Activated CD4-positive, alpha-beta memory T cell treated with anti-CD3 and anti-CD28 coated beads for 36 hours (primary cell): ENCODE measurements at regions of chr1 and their contacts with region 1.

Region 1: GRCh38 chr1:65002508-65003315 is 36.4 kb upstream of the JAK1 start:
- DNase-seq: peak; percentile 82
- H3K4me3 Mint-ChIP-seq: peak overlapping the region; percentile 76
- H3K27ac Mint-ChIP-seq: peak overlapping the region; percentile 84
- H3K4me1 Mint-ChIP-seq: peaks cover 23% of the 10 kb centered on the region
- H3K27me3 Mint-ChIP-seq: no peaks in the 10 kb centered on the region

Region 2: DNA sequence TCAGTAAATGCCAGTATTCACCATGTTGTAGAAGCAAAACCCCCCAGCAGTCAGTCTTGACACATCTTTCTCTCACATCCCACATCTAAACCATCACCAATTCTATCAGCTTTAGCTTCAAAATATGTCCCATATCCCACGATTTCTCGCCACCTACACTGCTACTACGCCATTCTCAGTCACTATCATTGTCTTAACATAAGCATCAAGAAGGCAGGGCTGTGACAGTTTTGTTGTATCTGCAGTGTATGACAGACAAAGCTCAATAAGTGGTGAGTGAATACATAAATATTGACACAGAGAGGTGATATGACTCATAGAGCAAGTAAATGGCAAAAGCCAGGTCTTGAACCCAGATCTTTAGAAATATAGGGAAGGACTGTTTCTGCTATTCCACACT is 96.3 kb before region 1 on chr1:
- CTCF ChIA-PET with region 1: no interaction called
- POLR2A ChIA-PET with region 1: no interaction called
- intact Hi-C with region 1: loop called (anchors 5 kb)
- DNase-seq: peak; percentile 59
- H3K4me3 Mint-ChIP-seq: no peak overlapping the region
- H3K27ac Mint-ChIP-seq: peak overlapping the region; percentile 58
- H3K4me1 Mint-ChIP-seq: peaks cover 91% of the 10 kb centered on the region
- H3K27me3 Mint-ChIP-seq: no peaks in the 10 kb centered on the region

Region 3: GRCh38 chr1:64956733-64957441 is 45.8 kb before region 1 on chr1:
- CTCF ChIA-PET with region 1: interaction called, 3 read pairs
- POLR2A ChIA-PET with region 1: interaction called, 14 read pairs
- intact Hi-C with region 1: loop called (anchors 2 kb)
- DNase-seq: peak; percentile 76
- H3K4me3 Mint-ChIP-seq: no peak overlapping the region
- H3K27ac Mint-ChIP-seq: no peak overlapping the region
- H3K4me1 Mint-ChIP-seq: peaks cover 59% of the 10 kb centered on the region
- H3K27me3 Mint-ChIP-seq: no peaks in the 10 kb centered on the region

Region 4: DNA sequence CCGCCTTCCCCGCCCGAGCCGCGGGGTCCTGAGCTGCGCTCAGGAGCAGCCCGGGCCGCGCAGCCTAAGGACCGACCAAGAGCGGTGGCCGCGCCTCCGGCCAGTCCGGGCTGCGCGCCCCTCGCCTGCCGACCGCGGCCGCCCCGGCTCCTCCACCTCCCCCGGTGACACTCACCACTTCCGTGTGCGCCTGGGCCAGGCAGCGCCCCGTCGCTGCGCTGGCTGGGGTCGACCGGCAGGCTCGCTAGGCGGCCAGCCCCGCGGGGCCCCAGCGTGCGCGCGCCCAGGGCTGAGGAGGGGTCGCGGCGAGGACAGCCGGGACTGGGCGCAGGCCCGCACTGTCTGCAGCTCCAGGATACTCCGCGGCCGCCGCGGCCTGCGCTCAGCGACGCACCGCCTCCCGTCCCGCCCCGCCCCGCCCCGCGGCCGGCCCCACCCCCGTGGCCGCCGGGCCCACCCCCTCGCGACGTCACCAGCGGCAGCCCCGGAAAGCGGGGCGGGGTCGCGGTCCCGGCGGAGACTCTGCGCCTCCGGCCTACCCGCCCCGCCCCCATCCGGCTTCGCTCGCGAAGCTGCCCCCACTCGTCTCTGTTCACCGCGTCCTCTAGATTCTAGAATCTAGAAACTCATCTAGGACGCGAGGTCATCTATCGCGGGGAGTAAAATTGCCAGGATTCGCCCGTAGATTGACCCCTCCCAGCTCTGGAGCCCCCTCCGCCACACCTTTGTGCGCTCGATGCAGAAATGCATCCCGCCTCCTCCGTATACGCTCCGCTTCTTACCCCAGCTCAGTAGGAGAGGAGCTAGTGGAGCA is 36.3 kb before region 1 on chr1 and contains the start of gene JAK1:
- CTCF ChIA-PET with region 1: interaction called, 4 read pairs
- POLR2A ChIA-PET with region 1: interaction called, 14 read pairs
- intact Hi-C with region 1: loop called (anchors 1 kb)
- DNase-seq: peak; percentile 89
- H3K4me3 Mint-ChIP-seq: peak within 1 kb of the TSS; percentile 91
- H3K27ac Mint-ChIP-seq: peak within 1 kb of the TSS; percentile 72
- H3K4me1 Mint-ChIP-seq: peaks cover 48% of the 10 kb centered on the region
- H3K27me3 Mint-ChIP-seq: no peaks in the 10 kb centered on the region
- total RNA-seq, gene JAK1: 115 to 128 TPM

Region 5: DNA sequence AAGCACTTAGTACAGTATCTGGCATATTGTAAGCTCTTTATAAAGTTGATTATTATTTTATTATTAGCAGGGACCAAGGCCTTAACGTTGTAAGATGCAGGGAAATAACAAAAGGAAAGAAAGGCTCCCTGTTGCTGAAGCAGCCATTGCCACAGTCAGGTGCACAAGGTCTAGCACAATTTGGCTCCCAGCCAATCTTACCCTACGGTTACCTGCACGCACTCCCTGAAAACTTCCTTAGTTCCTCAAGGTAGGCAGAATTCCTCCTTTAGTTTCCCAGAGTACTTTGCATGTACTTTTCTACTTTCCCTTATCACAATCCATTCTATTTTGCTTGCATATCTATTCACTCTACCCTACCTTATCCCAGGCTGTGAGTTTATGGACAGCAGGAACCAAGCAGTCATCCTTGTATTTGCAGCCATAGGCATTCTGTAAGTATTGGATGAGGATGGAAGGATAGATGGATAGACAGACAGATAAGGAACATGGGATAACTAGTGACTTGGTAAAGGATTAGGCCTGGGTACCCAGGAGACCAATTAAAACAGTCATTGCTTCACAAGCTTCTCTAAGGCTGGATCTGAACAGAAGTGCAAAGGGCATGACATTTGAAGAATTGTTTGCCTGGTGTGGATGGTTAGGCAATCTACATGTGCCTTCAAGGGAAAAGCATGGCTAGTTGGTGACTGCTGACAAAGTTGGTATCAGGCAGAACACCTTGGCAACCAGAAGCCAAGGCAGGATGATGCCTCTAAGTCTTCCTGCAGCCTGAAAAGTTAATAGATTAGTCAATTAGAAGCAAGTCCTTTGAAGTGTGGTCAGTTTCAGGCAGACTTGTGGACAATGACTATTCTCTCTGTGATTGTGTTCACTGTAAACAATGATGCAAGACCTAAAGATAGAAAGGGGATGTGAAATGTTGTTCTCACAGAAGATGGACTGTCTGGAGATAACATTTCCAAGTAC is 15.5 kb before region 1 on chr1:
- CTCF ChIA-PET with region 1: no interaction called
- POLR2A ChIA-PET with region 1: no interaction called
- intact Hi-C with region 1: no loop called
- DNase-seq: no peak
- H3K4me3 Mint-ChIP-seq: no peak overlapping the region
- H3K27ac Mint-ChIP-seq: no peak overlapping the region
- H3K4me1 Mint-ChIP-seq: no peaks in the 10 kb centered on the region
- H3K27me3 Mint-ChIP-seq: no peaks in the 10 kb centered on the region

Region 6: GRCh38 chr1:65042467-65042866 is 39.8 kb after region 1 on chr1:
- CTCF ChIA-PET with region 1: no interaction called
- POLR2A ChIA-PET with region 1: no interaction called
- intact Hi-C with region 1: loop called (anchors 1 kb)
- DNase-seq: no peak
- H3K4me3 Mint-ChIP-seq: no peak overlapping the region
- H3K27ac Mint-ChIP-seq: no peak overlapping the region
- H3K4me1 Mint-ChIP-seq: peaks cover 33% of the 10 kb centered on the region
- H3K27me3 Mint-ChIP-seq: no peaks in the 10 kb centered on the region

Region 7: GRCh38 chr1:65056234-65056633 is 53.5 kb after region 1 on chr1:
- CTCF ChIA-PET with region 1: no interaction called
- POLR2A ChIA-PET with region 1: no interaction called
- intact Hi-C with region 1: no loop called
- DNase-seq: no peak
- H3K4me3 Mint-ChIP-seq: no peak overlapping the region
- H3K27ac Mint-ChIP-seq: no peak overlapping the region
- H3K4me1 Mint-ChIP-seq: peaks cover 23% of the 10 kb centered on the region
- H3K27me3 Mint-ChIP-seq: no peaks in the 10 kb centered on the region

Region 8: GRCh38 chr1:65148548-65149350 is 146.0 kb after region 1 on chr1:
- CTCF ChIA-PET with region 1: no interaction called
- POLR2A ChIA-PET with region 1: no interaction called
- intact Hi-C with region 1: loop called (anchors 5 kb)
- DNase-seq: peak; percentile 65
- H3K4me3 Mint-ChIP-seq: peak overlapping the region; percentile 76
- H3K27ac Mint-ChIP-seq: no peak overlapping the region
- H3K4me1 Mint-ChIP-seq: peaks cover 14% of the 10 kb centered on the region
- H3K27me3 Mint-ChIP-seq: peaks cover 31% of the 10 kb centered on the region